Activated CD4-positive, alpha-beta T cell treated with anti-CD3 and anti-CD28 coated beads for 36 hours (primary cell): ENCODE measurements at regions of chr2 and their contacts with region 1.

Region 1: GRCh38 chr2:38720613-38721241 is 30.4 kb downstream of the SRSF7 start:
- DNase-seq: no peak
- ATAC-seq: no peak
- H3K4me3 Mint-ChIP-seq: peak overlapping the region; percentile 27
- H3K27ac Mint-ChIP-seq: peak overlapping the region; percentile 78
- H3K4me1 Mint-ChIP-seq: peaks cover 75% of the 10 kb centered on the region
- H3K27me3 Mint-ChIP-seq: no peaks in the 10 kb centered on the region

Region 2: DNA sequence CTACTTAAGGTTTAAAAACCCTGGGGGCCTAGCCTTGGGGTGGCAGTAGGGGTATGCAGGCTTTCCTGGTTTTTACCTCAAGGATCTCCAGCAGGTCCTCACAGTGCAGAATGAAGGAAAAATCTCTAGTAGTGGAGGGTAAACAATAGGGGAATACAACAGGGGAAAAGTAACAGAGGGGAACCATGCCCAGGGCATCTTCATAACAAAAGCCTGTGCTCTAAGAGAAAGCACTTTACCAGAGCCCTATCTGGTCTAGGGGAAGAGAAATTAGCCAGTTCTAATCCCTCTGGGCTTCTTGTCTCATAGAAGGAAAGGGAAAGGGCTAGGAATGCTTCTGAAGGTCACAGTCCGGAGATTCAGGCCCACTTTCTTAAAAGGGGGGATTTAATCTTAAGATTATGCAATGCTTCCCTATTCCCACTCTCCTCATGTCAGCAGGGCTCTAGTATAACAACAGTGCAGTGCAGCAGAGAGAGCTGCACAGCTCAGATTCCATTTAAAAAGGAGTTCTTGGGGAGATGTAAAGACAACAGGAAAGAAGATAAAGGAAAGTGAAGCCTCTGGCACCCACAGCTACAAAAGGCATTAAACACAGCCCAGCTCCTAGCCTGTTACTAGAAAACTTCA is 495.8 kb before region 1 on chr2:
- CTCF ChIA-PET with region 1: no interaction called
- POLR2A ChIA-PET with region 1: no interaction called
- intact Hi-C with region 1: no loop called
- DNase-seq: no peak
- ATAC-seq: no peak
- H3K4me3 Mint-ChIP-seq: no peak overlapping the region
- H3K27ac Mint-ChIP-seq: no peak overlapping the region
- H3K4me1 Mint-ChIP-seq: no peaks in the 10 kb centered on the region
- H3K27me3 Mint-ChIP-seq: peaks cover 34% of the 10 kb centered on the region

Region 3: GRCh38 chr2:38315707-38316333 is 404.9 kb before region 1 on chr2:
- CTCF ChIA-PET with region 1: no interaction called
- POLR2A ChIA-PET with region 1: no interaction called
- intact Hi-C with region 1: loop called (anchors 5 kb)
- DNase-seq: peak; percentile 26
- ATAC-seq: peak; percentile 100
- H3K4me3 Mint-ChIP-seq: no peak overlapping the region
- H3K27ac Mint-ChIP-seq: no peak overlapping the region
- H3K4me1 Mint-ChIP-seq: peaks cover 16% of the 10 kb centered on the region
- H3K27me3 Mint-ChIP-seq: no peaks in the 10 kb centered on the region

Region 4: GRCh38 chr2:38653715-38654527 is 66.8 kb before region 1 on chr2:
- CTCF ChIA-PET with region 1: interaction called, 8 read pairs
- POLR2A ChIA-PET with region 1: interaction called, 4 read pairs
- intact Hi-C with region 1: loop called (anchors 1 kb)
- DNase-seq: peak; percentile 87
- ATAC-seq: peak; percentile 81
- H3K4me3 Mint-ChIP-seq: peak overlapping the region; percentile 44
- H3K27ac Mint-ChIP-seq: peak overlapping the region; percentile 98
- H3K4me1 Mint-ChIP-seq: peaks cover 58% of the 10 kb centered on the region
- H3K27me3 Mint-ChIP-seq: no peaks in the 10 kb centered on the region

Region 5: DNA sequence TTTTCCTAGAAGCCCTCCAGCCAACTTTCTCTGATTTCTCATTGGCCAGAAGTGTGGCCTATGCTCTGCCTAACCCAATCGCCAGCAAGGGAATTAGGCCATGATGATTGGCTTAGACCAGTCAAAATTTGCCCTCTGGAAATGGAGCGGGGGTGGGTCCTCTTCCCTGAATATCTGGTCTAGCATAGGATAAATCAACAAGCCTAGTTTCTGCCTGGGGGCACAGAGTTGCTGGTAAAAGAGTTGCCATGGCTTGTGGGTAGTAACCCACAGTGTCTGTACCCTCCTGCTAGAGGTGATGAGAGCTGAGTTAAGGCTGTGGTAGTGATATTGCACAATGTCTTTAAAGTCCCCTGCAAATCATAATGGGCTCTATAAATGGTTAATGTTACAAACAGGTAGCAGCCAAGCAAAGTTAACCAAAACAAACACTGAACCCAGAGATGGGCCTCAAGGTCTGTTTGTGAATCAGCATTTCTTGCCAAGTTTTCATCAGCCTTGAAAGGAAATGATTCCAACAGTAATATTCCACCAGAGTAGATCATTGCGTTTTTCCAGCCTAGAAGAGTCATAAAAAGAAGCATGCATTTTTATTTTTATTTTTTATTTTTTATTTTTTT is 35.5 kb before region 1 on chr2:
- CTCF ChIA-PET with region 1: interaction called, 5 read pairs
- POLR2A ChIA-PET with region 1: no interaction called
- intact Hi-C with region 1: loop called (anchors 5 kb)
- DNase-seq: no peak
- ATAC-seq: peak; percentile 52
- H3K4me3 Mint-ChIP-seq: no peak overlapping the region
- H3K27ac Mint-ChIP-seq: no peak overlapping the region
- H3K4me1 Mint-ChIP-seq: peaks cover 47% of the 10 kb centered on the region
- H3K27me3 Mint-ChIP-seq: no peaks in the 10 kb centered on the region

Region 6: DNA sequence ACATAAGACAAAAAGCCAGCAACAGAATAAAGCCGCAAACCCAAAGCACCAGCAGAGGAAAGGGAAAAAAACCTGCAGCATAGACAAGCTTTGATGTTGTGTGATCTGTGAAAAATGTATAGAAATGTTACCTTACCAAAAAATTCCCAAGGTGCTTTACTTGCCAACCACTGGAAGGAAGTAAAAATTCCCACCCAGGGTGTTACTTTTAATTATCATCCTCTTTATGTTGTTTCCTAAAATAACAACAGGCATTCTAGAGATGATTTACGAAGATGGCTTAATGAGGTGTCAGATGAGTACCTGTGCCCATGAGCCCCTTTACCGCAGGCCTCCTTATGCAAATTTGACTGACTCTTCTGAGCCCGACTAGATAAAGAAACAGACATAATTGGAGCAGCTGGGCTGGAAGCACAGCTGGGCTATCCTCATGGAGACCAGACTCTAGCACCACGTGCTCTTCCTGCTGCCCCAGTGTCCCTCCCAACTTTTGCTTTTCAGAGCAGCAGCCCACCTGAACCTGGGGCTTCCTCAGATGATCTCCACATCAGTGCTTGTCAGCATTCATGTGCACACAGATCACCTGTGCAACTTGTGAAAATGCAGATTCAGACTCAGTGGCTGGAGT is 11.0 kb before region 1 on chr2:
- CTCF ChIA-PET with region 1: interaction called, 5 read pairs
- POLR2A ChIA-PET with region 1: no interaction called
- intact Hi-C with region 1: loop called (anchors 2 kb)
- DNase-seq: peak; percentile 70
- ATAC-seq: peak; percentile 75
- H3K4me3 Mint-ChIP-seq: peak overlapping the region; percentile 48
- H3K27ac Mint-ChIP-seq: peak overlapping the region; percentile 88
- H3K4me1 Mint-ChIP-seq: peaks cover 76% of the 10 kb centered on the region
- H3K27me3 Mint-ChIP-seq: no peaks in the 10 kb centered on the region

Region 7: GRCh38 chr2:38892819-38893218 is 172.1 kb after region 1 on chr2:
- CTCF ChIA-PET with region 1: no interaction called
- POLR2A ChIA-PET with region 1: no interaction called
- intact Hi-C with region 1: no loop called
- DNase-seq: no peak
- ATAC-seq: peak; percentile 65
- H3K4me3 Mint-ChIP-seq: no peak overlapping the region
- H3K27ac Mint-ChIP-seq: no peak overlapping the region
- H3K4me1 Mint-ChIP-seq: peaks cover 2% of the 10 kb centered on the region
- H3K27me3 Mint-ChIP-seq: peaks cover 2% of the 10 kb centered on the region

Region 8: GRCh38 chr2:39024833-39025232 is 304.1 kb after region 1 on chr2:
- CTCF ChIA-PET with region 1: no interaction called
- POLR2A ChIA-PET with region 1: no interaction called
- intact Hi-C with region 1: no loop called
- DNase-seq: no peak
- ATAC-seq: peak; percentile 86
- H3K4me3 Mint-ChIP-seq: no peak overlapping the region
- H3K27ac Mint-ChIP-seq: no peak overlapping the region
- H3K4me1 Mint-ChIP-seq: peaks cover 1% of the 10 kb centered on the region
- H3K27me3 Mint-ChIP-seq: no peaks in the 10 kb centered on the region